Aorta (tissue), 5 donors: ENCODE measurements at regions of chr14 and their contacts with region 1.

Region 1: DNA sequence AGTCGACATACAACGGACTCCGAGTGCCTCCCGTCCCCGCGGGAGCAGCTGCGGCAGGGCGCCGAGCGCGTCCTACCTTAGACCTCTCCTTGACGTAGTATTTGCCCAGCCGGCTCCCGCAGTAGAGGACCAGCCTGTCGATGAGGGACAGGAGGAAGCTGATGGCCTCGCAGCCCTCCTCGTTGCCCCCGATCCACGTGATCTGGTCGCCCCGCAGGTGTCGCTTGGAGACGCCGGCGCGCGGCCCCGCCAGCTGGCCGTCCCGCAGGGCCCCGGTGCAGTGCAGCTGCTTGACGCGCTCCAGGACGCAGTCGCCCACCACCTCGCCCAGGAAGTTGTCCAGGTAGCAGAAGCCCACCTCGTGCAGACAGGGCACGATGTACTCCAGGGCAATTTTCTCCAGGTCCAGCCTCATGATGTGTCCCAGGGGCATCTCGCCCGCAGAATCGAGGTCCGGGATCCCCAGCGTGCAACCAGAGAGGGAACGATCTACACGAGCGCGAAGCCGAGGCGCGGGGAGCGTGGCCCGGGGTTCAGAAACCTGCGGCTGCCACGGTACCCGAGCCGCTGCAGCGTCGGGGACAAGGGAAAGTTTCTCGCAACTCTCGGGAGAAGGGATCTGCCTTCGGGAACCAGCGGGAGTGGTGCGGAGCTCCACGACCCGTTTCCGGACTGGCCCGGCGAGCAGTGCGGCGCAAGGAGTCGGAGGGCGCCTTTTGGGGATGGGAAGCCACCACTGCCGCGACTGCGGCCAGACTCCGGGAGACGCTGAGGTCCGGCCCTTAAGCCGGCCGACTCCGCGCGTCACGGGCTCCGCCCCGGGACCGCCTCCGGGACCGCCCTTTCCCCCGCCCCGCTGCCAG is at the start of gene EGLN3:
- DNase-seq: peak; percentile 92 to 97
- ATAC-seq: peak; percentile 98
- H3K4me3 ChIP-seq: peak within 1 kb of the TSS; percentile 23 to 82
- H3K27ac ChIP-seq: peak within 1 kb of the TSS in 1 of 2 donors; percentile 15
- H3K4me1 ChIP-seq: no peaks in the 10 kb centered on the region
- H3K27me3 ChIP-seq: no peaks in the 10 kb centered on the region
- total RNA-seq, gene EGLN3: 23.9 to 46.7 TPM

Region 2: DNA sequence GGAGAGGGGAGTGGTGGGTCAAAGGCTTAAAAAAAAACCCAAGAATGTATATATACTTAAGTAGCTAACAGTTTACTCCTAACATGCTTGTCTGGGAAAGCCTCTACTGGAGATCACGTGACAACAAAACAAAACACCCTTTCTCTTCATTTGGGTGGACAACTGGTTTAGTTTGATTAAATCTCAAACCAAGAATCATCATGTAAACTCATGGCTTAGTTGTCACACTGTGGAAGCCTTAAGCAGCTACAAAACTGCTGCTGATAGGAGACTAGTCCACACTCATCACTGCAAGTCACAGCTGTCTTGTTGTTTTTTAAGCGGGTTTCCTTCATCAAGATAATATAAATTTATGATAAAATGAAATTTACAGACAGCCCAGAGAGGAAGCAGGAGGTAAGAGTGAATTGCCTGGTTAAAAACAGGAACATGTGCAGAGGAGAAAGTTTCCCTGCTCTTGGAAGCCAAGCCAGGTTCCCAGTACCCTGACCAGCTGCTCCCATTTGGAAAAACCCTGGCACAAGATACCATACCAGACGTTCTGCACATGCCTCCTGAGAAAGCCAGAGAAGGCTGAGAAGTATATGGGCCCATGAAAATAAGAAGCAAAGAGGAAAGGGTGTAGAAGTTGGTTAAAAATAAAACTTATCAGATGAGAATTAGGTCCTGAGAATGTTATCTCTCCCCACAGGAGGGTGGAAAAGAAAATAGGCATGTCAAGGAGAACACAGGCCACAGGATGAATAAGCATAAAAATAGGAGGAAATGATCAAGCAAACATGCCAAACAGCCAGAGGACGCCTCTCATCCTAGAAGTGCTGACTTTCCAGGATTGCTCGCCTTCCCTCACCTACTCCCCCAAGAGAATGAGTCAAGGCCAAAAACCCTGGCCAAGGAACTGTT is 33.6 kb before region 1 on chr14:
- intact Hi-C with region 1: loop called in 1 of 2 experiments (anchors 2 kb)
- DNase-seq: no peak
- ATAC-seq: peak; percentile 75
- H3K4me3 ChIP-seq: no peak overlapping the region
- H3K27ac ChIP-seq: peak overlapping the region; percentile 76 to 91
- H3K4me1 ChIP-seq: peaks cover 6 to 10% of the 10 kb centered on the region in 2 donors
- H3K27me3 ChIP-seq: no peaks in the 10 kb centered on the region

Region 3: GRCh38 chr14:34059855-34060638 is 109.5 kb after region 1 on chr14:
- intact Hi-C with region 1: loop called in 1 of 2 experiments (anchors 5 kb)
- DNase-seq: peak; percentile 87 to 95
- ATAC-seq: peak; percentile 95
- H3K4me3 ChIP-seq: peak overlapping the region; percentile 11 to 38
- H3K27ac ChIP-seq: peak overlapping the region in 1 of 2 donors; percentile 77
- H3K4me1 ChIP-seq: no peaks in the 10 kb centered on the region
- H3K27me3 ChIP-seq: no peaks in the 10 kb centered on the region

Region 4: GRCh38 chr14:34098045-34098984 is 147.8 kb after region 1 on chr14:
- intact Hi-C with region 1: loop called in 1 of 2 experiments (anchors 2 kb)
- DNase-seq: no peak
- ATAC-seq: peak; percentile 54
- H3K4me3 ChIP-seq: no peak overlapping the region
- H3K27ac ChIP-seq: no peak overlapping the region
- H3K4me1 ChIP-seq: no peaks in the 10 kb centered on the region
- H3K27me3 ChIP-seq: no peaks in the 10 kb centered on the region